Astrocyte of the cerebellum (primary cell): ENCODE measurements at regions of chr2 and their contacts with region 1.

Region 1: DNA sequence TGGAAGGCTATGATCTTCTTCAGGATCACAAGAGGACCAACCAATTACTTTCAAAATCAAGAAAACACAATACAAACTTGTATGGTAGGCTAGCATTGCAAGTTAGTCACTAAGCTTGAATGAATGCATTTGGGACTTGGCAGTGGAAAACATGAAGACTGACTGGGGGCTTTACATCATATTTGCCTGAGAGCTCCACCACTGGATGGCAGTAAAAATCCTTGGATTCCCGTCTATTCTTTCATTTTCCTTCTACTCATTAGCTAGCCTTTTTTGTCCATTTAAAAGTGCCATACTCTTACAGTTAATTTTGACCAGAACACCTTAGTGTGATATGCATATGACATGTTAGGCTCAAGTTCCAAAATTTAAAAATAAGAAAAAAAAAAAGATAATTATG is 63.5 kb upstream of the RASGRP3 start:
- DNase-seq: peak; percentile 38
- H3K4me3 ChIP-seq: no peak overlapping the region
- CTCF ChIP-seq: peak; percentile 58

Region 2: DNA sequence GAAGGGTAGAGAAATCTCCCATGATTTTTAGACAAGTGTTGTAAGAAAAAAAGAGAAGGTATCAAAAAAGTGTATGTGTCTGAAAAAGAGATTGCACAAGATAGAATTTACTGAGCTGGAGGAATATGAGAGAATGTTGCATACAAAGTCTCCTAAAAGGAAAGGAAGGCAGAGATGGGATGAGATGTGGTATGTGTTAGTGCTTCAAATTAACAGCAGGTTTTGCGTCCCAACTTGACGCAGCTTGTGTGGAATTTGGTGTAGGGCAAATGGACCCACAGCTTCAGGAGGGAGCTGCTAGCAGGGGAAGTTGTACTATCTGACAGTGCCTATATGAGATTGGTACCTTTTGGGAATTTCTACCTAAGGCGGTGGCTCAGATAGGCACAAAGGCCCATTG is 54.5 kb after region 1 on chr2:
- in situ Hi-C with region 1: loop called (anchors 5 kb)
- DNase-seq: no peak
- H3K4me3 ChIP-seq: no peak overlapping the region
- CTCF ChIP-seq: no peak